ENCODE measurements at regions of chr12 and their contacts with region 1.

Region 1: DNA sequence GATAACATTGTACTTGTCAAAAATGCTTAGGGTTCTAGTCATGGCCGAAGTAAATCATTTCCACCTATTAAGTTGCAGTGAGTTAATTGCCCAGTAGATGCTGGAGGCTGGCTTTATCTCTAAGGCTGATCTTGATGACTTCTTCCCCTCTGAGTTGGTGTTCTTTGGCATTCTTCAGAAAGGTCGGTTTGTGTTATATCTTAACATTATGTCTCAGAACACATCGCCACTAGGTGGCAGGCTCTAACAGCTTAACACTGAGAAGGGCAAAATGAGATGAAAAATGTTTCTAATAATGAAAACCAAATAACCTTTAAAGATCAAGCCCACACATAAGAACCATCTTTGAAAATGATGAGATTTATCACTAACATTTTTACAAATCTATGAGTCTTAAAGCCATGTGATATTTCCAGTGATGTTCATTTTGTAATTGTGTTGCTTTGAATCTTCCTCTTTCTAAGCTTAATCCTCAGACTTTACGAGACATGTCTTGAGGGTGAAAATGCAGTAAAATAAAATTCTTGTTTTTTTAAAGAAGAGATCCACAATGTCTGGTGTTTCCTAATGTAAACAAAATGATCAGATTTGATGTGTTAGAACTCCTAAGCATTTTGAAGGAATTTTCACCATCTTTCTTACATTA is 28.6 kb downstream of the SUDS3 start:
- DNase-seq: peak; percentile 49
- CTCF ChIP-seq: peak; percentile 81

Region 2: GRCh38 chr12:118840399-118840798 is 435.4 kb after region 1 on chr12:
- in situ Hi-C with region 1: loop called (anchors 25 kb)
- DNase-seq: no peak
- CTCF ChIP-seq: peak; percentile 51

Region 3: GRCh38 chr12:119036878-119037825 is 632.2 kb after region 1 on chr12:
- in situ Hi-C with region 1: loop called (anchors 25 kb)
- DNase-seq: peak; percentile 61
- CTCF ChIP-seq: peak; percentile 66